Endothelial cell of umbilical vein (primary cell): ENCODE measurements at regions of chr2 and their contacts with region 1.

Region 1: GRCh38 chr2:96760036-96760985 is at the start of gene CNNM4:
- DNase-seq: peak; percentile 92
- H3K4me3 ChIP-seq: peak within 1 kb of the TSS in 2 of 3 experiments; percentile 31 to 32
- H3K27ac ChIP-seq: no peak within 1 kb of the TSS
- H3K4me1 ChIP-seq: peaks cover 16% of the 10 kb centered on the region
- H3K27me3 ChIP-seq: no peaks in the 10 kb centered on the region
- CTCF ChIP-seq: peak in 1 of 2 donors; percentile 14
- POLR2A ChIP-seq: peak; percentile 69
- total RNA-seq, gene CNNM4: 5.3 TPM in 2 replicates

Region 2: GRCh38 chr2:96536445-96537065 is 223.8 kb before region 1 on chr2 and contains the start of gene ARID5A:
- CTCF ChIA-PET with region 1: interaction called, 3 read pairs
- POLR2A ChIA-PET with region 1: no interaction called
- dilution Hi-C with region 1: no loop called
- intact Hi-C with region 1: loop called (anchors 5 kb)
- DNase-seq: peak; percentile 88
- H3K4me3 ChIP-seq: peak within 1 kb of the TSS; percentile 38 to 77 (median 56)
- H3K27ac ChIP-seq: peak within 1 kb of the TSS; percentile 67
- H3K4me1 ChIP-seq: peaks cover 30% of the 10 kb centered on the region
- H3K27me3 ChIP-seq: no peaks in the 10 kb centered on the region
- CTCF ChIP-seq: peak in 1 of 2 donors; percentile 31
- POLR2A ChIP-seq: peak; percentile 85
- total RNA-seq, gene ARID5A: 24.7 and 29.0 TPM in 2 replicates

Region 3: DNA sequence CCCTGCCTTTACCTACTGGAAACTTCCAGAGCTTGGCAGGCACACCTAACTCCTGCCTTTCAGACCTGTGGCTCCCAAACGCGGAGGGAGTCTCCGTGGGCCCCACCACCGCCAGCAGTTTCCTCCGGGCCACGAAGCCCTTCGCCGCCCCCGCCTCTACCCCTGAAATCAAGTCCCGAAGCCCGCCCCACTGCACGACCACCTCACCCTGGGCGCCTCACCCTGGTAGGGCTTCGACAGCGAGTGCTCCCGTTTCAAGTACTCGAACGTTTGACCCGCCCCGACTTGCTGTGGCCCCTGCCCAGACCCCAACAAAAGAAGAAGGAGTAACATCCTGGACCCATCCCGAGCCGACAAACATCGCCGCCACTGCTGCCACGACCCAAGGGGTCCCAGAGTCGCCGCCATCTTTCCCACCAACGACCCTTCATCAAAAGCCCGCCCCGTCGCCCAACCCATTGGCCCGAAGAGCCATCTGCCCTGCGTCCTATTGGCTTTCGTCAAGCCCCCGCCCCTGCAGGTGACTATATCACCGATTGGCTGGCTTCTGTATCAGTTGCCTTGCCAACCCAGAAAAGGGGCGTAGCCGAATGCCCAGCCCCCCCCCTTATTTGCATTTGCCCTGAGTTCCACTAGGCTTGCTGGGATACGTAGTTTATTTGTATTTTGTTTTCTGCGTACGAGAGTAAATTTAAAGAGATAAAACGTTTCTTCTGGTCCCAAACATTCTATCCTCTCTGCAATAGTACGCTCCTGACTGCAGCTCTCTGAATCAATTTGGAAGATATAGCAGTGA is 20.5 kb before region 1 on chr2 and contains the start of gene LMAN2L:
- CTCF ChIA-PET with region 1: interaction called, 4 read pairs
- POLR2A ChIA-PET with region 1: interaction called, 7 read pairs
- dilution Hi-C with region 1: no loop called
- intact Hi-C with region 1: loop called (anchors 1 kb)
- DNase-seq: peak; percentile 98
- H3K4me3 ChIP-seq: peak within 1 kb of the TSS; percentile 76 to 91 (median 84)
- H3K27ac ChIP-seq: peak within 1 kb of the TSS; percentile 58
- H3K4me1 ChIP-seq: peaks cover 16% of the 10 kb centered on the region
- H3K27me3 ChIP-seq: peaks cover 0 to 2% of the 10 kb centered on the region in 2 experiments
- CTCF ChIP-seq: no peak
- POLR2A ChIP-seq: peak; percentile 85
- total RNA-seq, gene LMAN2L: 15.4 and 18.2 TPM in 2 replicates

Region 4: DNA sequence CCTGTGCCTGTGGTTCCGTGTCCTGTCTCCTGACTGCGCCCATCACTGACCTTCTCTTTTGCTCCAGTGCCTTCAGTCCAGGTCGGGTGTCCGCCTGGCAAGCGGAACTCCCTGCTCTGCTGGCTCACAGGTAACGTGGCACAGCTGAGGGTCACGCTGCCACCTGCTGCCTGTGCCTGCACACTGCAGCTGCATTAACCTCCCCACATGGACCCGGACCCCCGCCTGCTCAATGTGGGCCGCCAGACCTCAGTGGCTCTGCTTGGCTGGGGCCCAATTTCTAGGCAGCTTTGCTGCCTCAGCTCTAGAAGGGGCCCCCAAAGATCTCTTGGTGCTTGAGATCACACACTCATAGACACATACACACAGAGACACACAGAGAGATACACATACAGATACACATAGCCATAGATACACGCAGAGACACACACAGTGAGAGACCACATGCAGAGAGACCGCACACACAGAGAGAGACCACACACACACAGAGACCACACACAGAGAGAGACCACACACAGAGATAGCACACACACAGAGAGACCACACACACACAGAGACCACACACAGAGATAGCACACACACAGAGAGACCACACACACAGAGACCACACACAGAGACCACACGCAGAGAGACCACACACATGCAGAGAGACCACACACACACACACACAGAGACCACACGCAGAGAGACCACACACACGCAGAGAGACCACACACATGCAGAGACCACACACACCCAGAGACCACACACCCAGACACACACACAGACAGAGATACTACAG is 40.9 kb after region 1 on chr2:
- CTCF ChIA-PET with region 1: interaction called, 5 read pairs
- POLR2A ChIA-PET with region 1: no interaction called
- dilution Hi-C with region 1: no loop called
- intact Hi-C with region 1: loop called (anchors 5 kb)
- DNase-seq: peak; percentile 55
- H3K4me3 ChIP-seq: no peak overlapping the region
- H3K27ac ChIP-seq: no peak overlapping the region
- H3K4me1 ChIP-seq: no peaks in the 10 kb centered on the region
- H3K27me3 ChIP-seq: no peaks in the 10 kb centered on the region
- CTCF ChIP-seq: peak; percentile 79 to 90
- POLR2A ChIP-seq: no peak

Region 5: DNA sequence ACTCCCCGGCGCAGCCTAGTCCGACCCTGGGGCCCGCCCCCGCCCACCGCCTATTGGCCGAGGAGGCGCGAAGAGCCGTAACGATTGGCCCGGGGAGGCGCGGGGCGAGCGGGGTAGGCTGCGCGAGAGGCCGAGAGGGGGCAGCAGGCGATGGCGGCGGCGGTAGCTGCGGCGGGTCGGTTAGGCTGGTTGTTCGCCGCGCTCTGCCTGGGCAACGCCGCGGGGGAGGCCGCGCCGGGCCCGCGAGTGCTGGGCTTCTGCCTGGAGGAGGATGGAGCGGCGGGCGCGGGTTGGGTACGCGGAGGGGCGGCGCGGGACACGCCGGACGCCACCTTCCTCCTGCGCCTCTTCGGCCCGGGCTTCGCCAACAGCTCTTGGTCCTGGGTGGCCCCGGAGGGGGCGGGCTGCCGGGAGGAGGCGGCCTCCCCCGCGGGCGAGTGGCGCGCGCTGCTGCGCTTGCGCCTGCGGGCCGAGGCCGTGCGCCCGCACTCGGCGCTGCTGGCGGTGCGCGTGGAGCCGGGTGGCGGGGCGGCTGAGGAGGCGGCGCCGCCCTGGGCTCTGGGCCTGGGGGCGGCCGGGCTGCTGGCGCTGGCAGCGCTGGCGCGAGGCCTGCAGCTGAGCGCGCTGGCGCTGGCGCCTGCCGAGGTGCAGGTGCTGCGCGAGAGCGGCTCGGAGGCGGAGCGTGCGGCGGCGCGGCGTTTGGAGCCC is 56.0 kb after region 1 on chr2 and contains the start of gene CNNM3:
- CTCF ChIA-PET with region 1: interaction called, 7 read pairs
- POLR2A ChIA-PET with region 1: interaction called, 6 read pairs
- dilution Hi-C with region 1: no loop called
- intact Hi-C with region 1: loop called (anchors 1 kb)
- DNase-seq: peak; percentile 95
- H3K4me3 ChIP-seq: peak within 1 kb of the TSS; percentile 52 to 82 (median 75)
- H3K27ac ChIP-seq: no peak within 1 kb of the TSS
- H3K4me1 ChIP-seq: peaks cover 13% of the 10 kb centered on the region
- H3K27me3 ChIP-seq: no peaks in the 10 kb centered on the region
- CTCF ChIP-seq: peak; percentile 45 to 76
- POLR2A ChIP-seq: peak; percentile 60
- total RNA-seq, gene CNNM3: 13.0 and 13.5 TPM in 2 replicates

Region 6: DNA sequence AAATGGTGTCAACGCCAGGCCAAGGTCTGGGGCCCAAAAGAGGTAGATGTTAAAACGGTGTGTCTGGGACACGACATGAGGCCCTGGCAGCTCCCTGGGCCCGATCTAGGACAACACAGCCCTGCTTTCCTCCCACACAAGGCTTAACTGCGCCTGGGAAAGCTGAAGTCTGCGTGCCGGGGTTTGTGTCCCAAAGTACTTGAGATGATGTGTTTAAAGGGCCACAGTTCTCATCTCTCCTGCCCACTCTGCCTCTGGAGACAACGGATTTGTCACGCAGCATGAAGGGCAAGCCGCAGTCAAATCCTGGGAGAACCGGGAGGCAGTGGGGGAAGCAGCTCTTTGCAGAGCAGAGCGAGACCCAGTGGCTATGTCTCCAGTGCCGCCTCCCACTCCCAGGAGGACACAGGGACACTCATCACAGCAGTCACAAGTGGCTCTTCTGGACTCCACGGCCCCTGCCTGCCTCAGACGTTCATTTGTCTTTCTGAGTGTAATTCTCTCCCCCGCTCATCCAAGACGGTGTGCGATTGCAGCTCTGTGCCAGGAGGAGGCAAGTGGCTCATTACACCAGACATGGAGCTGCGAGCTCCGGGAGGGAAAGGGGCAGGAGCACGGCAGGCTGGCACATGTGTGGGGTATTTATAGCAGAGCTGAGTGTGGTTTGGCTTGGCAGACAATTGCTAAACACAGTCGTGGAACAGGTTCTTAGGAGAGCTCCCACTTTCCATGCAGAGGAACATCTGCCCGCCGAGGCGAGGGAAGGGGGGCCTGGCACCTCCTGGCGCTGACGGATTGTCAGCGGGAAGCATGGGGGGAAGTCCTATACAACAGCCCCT is 167.3 kb after region 1 on chr2:
- CTCF ChIA-PET with region 1: no interaction called
- POLR2A ChIA-PET with region 1: no interaction called
- dilution Hi-C with region 1: no loop called
- intact Hi-C with region 1: no loop called
- DNase-seq: no peak
- H3K4me3 ChIP-seq: no peak overlapping the region
- H3K27ac ChIP-seq: no peak overlapping the region
- H3K4me1 ChIP-seq: no peaks in the 10 kb centered on the region
- H3K27me3 ChIP-seq: peaks cover 4 to 10% of the 10 kb centered on the region in 2 experiments
- CTCF ChIP-seq: no peak
- POLR2A ChIP-seq: no peak

Region 7: GRCh38 chr2:96960153-96960961 is 200.0 kb after region 1 on chr2:
- CTCF ChIA-PET with region 1: no interaction called
- POLR2A ChIA-PET with region 1: no interaction called
- dilution Hi-C with region 1: no loop called
- intact Hi-C with region 1: loop called (anchors 5 kb)
- DNase-seq: peak; percentile 73
- H3K4me3 ChIP-seq: no peak overlapping the region
- H3K27ac ChIP-seq: no peak overlapping the region
- H3K4me1 ChIP-seq: no peaks in the 10 kb centered on the region
- H3K27me3 ChIP-seq: no peaks in the 10 kb centered on the region
- CTCF ChIP-seq: peak; percentile 76 to 96
- POLR2A ChIP-seq: no peak